A549 (cell line): ENCODE measurements at regions of chr1 and their contacts with region 1.

Region 1: DNA sequence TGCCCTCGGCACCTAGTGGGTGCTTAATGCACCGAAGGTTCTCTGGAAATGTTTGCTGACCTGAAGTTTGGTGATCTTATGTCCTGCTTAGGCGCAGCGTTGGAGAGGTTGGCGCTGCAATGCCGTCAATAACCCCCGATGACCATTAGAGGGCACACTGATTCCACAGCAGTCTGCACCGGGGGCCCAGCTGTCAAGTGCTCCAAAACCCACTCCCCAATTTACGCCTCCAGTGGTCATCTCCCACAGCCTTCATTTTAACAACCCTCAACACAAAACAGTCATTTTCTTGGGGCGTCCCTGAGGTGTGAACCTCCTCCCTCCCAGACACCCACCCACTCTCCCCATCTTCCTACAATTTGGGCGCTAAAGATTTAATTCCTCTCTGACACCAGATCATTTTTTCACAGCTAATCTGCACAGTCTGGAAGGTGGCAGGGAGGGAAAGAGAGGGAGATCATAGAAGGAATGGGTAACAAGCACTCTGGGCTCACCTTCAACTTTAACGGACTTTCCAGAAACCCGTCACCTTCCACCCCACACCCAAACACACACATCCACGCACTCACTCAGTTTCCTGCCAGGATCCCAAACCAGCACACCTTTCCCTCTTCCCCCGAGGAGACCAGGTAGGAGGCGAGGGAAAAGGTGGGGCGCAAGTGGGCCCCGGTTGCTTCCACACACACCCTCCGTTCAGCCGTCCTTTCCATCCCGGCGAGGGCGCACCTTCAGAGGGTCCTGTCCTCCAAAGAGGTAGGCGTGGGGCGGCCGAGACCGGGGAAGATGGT is 576 bp upstream of the NPR1 start:
- DNase-seq: peak; percentile 68 to 69
- ATAC-seq: peak; percentile 65 to 79; a peak in 5 of 6 replicates
- H3K4me3 ChIP-seq: peak overlapping the region; percentile 48
- H3K27ac ChIP-seq: peak overlapping the region in 1 of 2 experiments; percentile 81; a peak in 5 of 6 replicates
- H3K4me1 ChIP-seq: peaks cover 11% of the 10 kb centered on the region; the same call in 2 of the 3 replicates
- CTCF ChIP-seq: peak; percentile 94
- EP300 ChIP-seq: no peak
- POLR2A ChIP-seq: no peak
- RAD21 ChIP-seq: peak; percentile 95

Region 2: GRCh38 chr1:153688276-153688675 is 10.4 kb after region 1 on chr1:
- CTCF ChIA-PET with region 1: interaction called, 13 read pairs
- POLR2A ChIA-PET with region 1: no interaction called
- DNase-seq: no peak
- ATAC-seq: no peak
- H3K4me3 ChIP-seq: no peak overlapping the region
- H3K27ac ChIP-seq: no peak overlapping the region; a peak in 1 of 6 replicates
- H3K4me1 ChIP-seq: peaks cover 6% of the 10 kb centered on the region; the same call in 1 of the 3 replicates
- CTCF ChIP-seq: no peak
- EP300 ChIP-seq: no peak
- POLR2A ChIP-seq: no peak
- RAD21 ChIP-seq: no peak

Region 3: GRCh38 chr1:153727463-153728304 is 49.8 kb after region 1 on chr1 and contains the start of gene INTS3:
- CTCF ChIA-PET with region 1: interaction called, 14 read pairs
- POLR2A ChIA-PET with region 1: interaction called, 6 read pairs
- DNase-seq: peak; percentile 99 to 100
- ATAC-seq: peak; percentile 100
- H3K4me3 ChIP-seq: peak within 1 kb of the TSS; percentile 67
- H3K27ac ChIP-seq: peak within 1 kb of the TSS; percentile 96 to 99
- H3K4me1 ChIP-seq: peaks cover 19% of the 10 kb centered on the region
- CTCF ChIP-seq: no peak
- EP300 ChIP-seq: no peak
- POLR2A ChIP-seq: peak; percentile 84
- RAD21 ChIP-seq: no peak
- polyA plus RNA-seq, gene INTS3: 34.1 and 44.0 TPM in 2 replicates

Region 4: DNA sequence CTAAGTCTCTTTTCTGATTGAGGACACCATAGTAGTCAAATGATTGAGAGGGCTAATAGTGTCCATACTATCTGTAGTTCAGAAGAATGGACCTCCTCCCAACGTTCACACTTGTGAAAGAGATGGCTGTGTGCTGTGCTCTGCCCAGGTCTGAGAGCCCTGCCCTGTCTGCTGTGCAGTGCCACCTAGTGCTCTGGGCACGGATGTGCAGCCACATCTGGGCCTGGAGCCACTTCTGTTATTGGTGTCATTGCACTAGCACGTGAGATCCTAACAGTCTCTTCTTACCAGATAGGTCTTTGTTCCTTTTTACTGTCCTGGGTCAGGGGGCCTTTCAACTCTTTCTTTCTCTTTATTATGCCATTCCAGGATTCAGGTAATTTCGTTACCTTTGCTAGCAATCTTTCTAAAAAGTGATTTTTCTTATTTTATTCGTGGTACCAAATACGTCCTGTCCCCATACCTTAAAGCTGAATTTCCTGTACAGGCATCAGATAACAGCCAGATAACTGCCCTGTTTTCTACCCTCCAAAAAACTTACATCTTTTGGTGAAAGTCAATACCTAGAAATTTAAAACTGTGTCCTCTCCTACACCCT is 71.6 kb after region 1 on chr1:
- CTCF ChIA-PET with region 1: interaction called, 130 read pairs
- POLR2A ChIA-PET with region 1: no interaction called
- DNase-seq: peak; percentile 81 to 92
- ATAC-seq: peak; percentile 99 to 100
- H3K4me3 ChIP-seq: no peak overlapping the region
- H3K27ac ChIP-seq: no peak overlapping the region
- H3K4me1 ChIP-seq: no peaks in the 10 kb centered on the region
- CTCF ChIP-seq: peak; percentile 88
- EP300 ChIP-seq: no peak
- POLR2A ChIP-seq: no peak
- RAD21 ChIP-seq: peak; percentile 81 to 91

Region 5: GRCh38 chr1:153775458-153776327 is 97.8 kb after region 1 on chr1:
- CTCF ChIA-PET with region 1: interaction called, 92 read pairs
- POLR2A ChIA-PET with region 1: no interaction called
- DNase-seq: peak; percentile 26 to 39
- ATAC-seq: peak; percentile 51 to 77; a peak in 5 of 6 replicates
- H3K4me3 ChIP-seq: peak overlapping the region; percentile 52
- H3K27ac ChIP-seq: peak overlapping the region; percentile 13 to 71; a peak in 3 of 6 replicates
- H3K4me1 ChIP-seq: peaks cover 5% of the 10 kb centered on the region; the same call in 1 of the 3 replicates
- CTCF ChIP-seq: no peak
- EP300 ChIP-seq: no peak
- POLR2A ChIP-seq: no peak
- RAD21 ChIP-seq: no peak

Region 6: DNA sequence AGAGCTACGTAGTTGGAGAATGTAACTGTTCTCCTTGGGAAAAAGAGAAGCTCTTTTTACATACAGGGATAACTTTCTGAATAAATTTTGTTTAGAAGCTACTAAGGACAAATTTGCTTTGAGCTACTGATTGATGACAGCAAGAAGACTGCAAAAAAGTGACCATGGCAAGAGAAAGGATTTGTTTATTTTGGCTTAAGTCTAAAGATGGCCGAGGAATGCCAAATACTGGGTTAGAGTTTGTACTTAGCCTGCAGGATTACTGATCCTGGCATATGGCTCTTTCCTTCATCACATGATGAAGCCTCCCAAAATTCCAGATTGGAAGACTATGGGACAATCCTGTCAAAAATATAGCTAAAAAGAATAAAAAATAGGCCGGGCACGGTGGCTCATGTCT is 341.4 kb after region 1 on chr1:
- CTCF ChIA-PET with region 1: no interaction called
- POLR2A ChIA-PET with region 1: no interaction called
- DNase-seq: no peak
- ATAC-seq: no peak
- H3K4me3 ChIP-seq: no peak overlapping the region
- H3K27ac ChIP-seq: no peak overlapping the region
- H3K4me1 ChIP-seq: no peaks in the 10 kb centered on the region
- CTCF ChIP-seq: no peak
- EP300 ChIP-seq: no peak
- POLR2A ChIP-seq: no peak
- RAD21 ChIP-seq: no peak